A549 (cell line): ENCODE measurements at regions of chr1 and their contacts with region 1.

Region 1: GRCh38 chr1:240732390-240732789 is 120.4 kb upstream of the GREM2 start:
- DNase-seq: peak; percentile 68 to 73
- ATAC-seq: peak; percentile 98
- H3K4me3 ChIP-seq: no peak overlapping the region
- H3K27ac ChIP-seq: no peak overlapping the region
- H3K4me1 ChIP-seq: peaks cover 4% of the 10 kb centered on the region; the same call in 1 of the 3 replicates
- CTCF ChIP-seq: peak; percentile 87
- EP300 ChIP-seq: no peak
- POLR2A ChIP-seq: no peak
- RAD21 ChIP-seq: peak; percentile 91

Region 2: GRCh38 chr1:240666568-240667198 is 65.7 kb before region 1 on chr1:
- CTCF ChIA-PET with region 1: no interaction called
- POLR2A ChIA-PET with region 1: no interaction called
- DNase-seq: no peak
- ATAC-seq: no peak
- H3K4me3 ChIP-seq: no peak overlapping the region
- H3K27ac ChIP-seq: no peak overlapping the region
- H3K4me1 ChIP-seq: no peaks in the 10 kb centered on the region
- CTCF ChIP-seq: no peak
- EP300 ChIP-seq: no peak
- POLR2A ChIP-seq: no peak
- RAD21 ChIP-seq: no peak

Region 3: GRCh38 chr1:240717008-240717407 is 15.4 kb before region 1 on chr1:
- CTCF ChIA-PET with region 1: interaction called, 11 read pairs
- POLR2A ChIA-PET with region 1: no interaction called
- DNase-seq: no peak
- ATAC-seq: no peak
- H3K4me3 ChIP-seq: no peak overlapping the region
- H3K27ac ChIP-seq: no peak overlapping the region
- H3K4me1 ChIP-seq: no peaks in the 10 kb centered on the region
- CTCF ChIP-seq: no peak
- EP300 ChIP-seq: no peak
- POLR2A ChIP-seq: no peak
- RAD21 ChIP-seq: no peak

Region 4: GRCh38 chr1:240758296-240758695 is 25.9 kb after region 1 on chr1:
- CTCF ChIA-PET with region 1: interaction called, 13 read pairs
- POLR2A ChIA-PET with region 1: no interaction called
- DNase-seq: no peak
- ATAC-seq: no peak
- H3K4me3 ChIP-seq: no peak overlapping the region
- H3K27ac ChIP-seq: no peak overlapping the region
- H3K4me1 ChIP-seq: no peaks in the 10 kb centered on the region
- CTCF ChIP-seq: no peak
- EP300 ChIP-seq: no peak
- POLR2A ChIP-seq: no peak
- RAD21 ChIP-seq: no peak

Region 5: GRCh38 chr1:240888039-240888786 is 155.8 kb after region 1 on chr1:
- CTCF ChIA-PET with region 1: interaction called, 14 read pairs
- POLR2A ChIA-PET with region 1: no interaction called
- DNase-seq: peak; percentile 28 to 47
- ATAC-seq: peak in 1 of 2 experiments; percentile 70; a peak in 4 of 6 replicates
- H3K4me3 ChIP-seq: no peak overlapping the region
- H3K27ac ChIP-seq: no peak overlapping the region
- H3K4me1 ChIP-seq: no peaks in the 10 kb centered on the region
- CTCF ChIP-seq: peak; percentile 71
- EP300 ChIP-seq: no peak
- POLR2A ChIP-seq: no peak
- RAD21 ChIP-seq: peak; percentile 77 to 83

Region 6: DNA sequence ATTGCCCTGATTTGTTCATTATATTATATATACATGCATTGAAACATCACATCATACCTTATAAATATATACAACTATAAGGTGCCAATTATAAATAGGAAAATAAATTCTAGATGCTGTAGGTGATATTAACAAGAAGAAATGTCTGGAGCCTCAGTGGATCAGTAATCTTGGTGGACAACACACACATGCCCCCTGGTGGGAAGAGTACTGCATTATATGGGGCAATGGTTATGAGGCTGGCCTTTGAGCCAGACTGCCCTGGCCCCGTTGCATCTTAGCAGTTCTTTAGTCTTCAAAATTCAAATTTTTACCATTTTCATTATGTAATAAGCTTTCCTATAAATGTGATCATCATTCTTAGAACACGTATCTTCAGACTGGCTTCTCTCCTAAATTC is 214.5 kb after region 1 on chr1:
- CTCF ChIA-PET with region 1: interaction called, 35 read pairs
- POLR2A ChIA-PET with region 1: no interaction called
- DNase-seq: peak; percentile 35 to 46
- ATAC-seq: peak; percentile 87 to 89; a peak in 5 of 6 replicates
- H3K4me3 ChIP-seq: no peak overlapping the region
- H3K27ac ChIP-seq: no peak overlapping the region
- H3K4me1 ChIP-seq: no peaks in the 10 kb centered on the region
- CTCF ChIP-seq: peak; percentile 60
- EP300 ChIP-seq: no peak
- POLR2A ChIP-seq: no peak
- RAD21 ChIP-seq: peak; percentile 67 to 72